ENCODE measurements at regions of chr3 and their contacts with region 1.

Region 1: GRCh38 chr3:112979240-112979832 is 4.4 kb upstream of the CD200R1 start:
- DNase-seq: peak in 1 of 2 donors; percentile 79
- ATAC-seq: peak in 2 of 3 donors; percentile 46 to 52
- H3K4me3 ChIP-seq: no peak overlapping the region
- H3K4me3 Mint-ChIP-seq: no peak overlapping the region
- H3K27ac ChIP-seq: no peak overlapping the region
- H3K27ac Mint-ChIP-seq: no peak overlapping the region
- H3K4me1 ChIP-seq: peaks cover 7% of the 10 kb centered on the region
- H3K4me1 Mint-ChIP-seq: peaks cover 4 to 17% of the 10 kb centered on the region in 2 donors
- H3K27me3 ChIP-seq: no peaks in the 10 kb centered on the region
- H3K27me3 Mint-ChIP-seq: no peaks in the 10 kb centered on the region
- CTCF ChIP-seq: peak; percentile 85

Region 2: DNA sequence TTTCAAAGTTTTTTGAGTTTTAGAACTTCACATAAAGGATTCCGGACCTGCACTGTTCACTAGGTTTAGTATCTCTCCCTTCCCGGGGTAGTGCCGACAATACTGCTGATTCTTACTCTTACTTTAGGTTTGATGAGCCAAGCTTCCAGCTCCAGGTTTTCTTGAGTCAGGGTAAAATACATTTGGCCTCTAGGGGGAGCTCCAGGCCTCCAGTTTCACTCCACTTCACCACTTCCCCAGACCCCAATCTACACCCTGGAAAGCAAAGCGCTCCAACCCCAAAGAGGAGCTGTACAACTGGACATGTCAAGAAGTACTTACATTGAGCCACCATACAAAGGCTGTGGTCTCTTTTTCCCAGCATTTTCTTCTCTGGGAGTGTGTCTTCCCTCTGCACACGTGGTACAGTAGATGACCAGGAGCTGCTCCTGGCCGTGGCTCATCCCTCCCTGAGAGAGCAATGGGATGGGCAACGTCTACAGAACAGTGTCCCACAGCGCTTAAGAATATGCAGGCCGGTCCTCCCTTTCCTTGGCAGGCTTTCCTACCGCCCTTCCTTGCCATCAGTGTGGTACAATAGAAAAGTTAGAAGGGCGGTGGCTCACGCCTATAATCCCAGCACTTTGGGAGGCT is 244.5 kb before region 1 on chr3:
- intact Hi-C with region 1: loop called (anchors 1 kb)
- DNase-seq: peak; percentile 38 to 86
- ATAC-seq: peak; percentile 74 to 77 (median 75)
- H3K4me3 ChIP-seq: no peak overlapping the region
- H3K4me3 Mint-ChIP-seq: no peak overlapping the region
- H3K27ac ChIP-seq: no peak overlapping the region
- H3K27ac Mint-ChIP-seq: peak overlapping the region in 1 of 2 donors; percentile 51
- H3K4me1 ChIP-seq: peaks cover 8% of the 10 kb centered on the region
- H3K4me1 Mint-ChIP-seq: peaks cover 0 to 9% of the 10 kb centered on the region in 2 donors
- H3K27me3 ChIP-seq: no peaks in the 10 kb centered on the region
- H3K27me3 Mint-ChIP-seq: no peaks in the 10 kb centered on the region
- CTCF ChIP-seq: peak; percentile 71

Measured in natural killer cell (primary cell).